ENCODE measurements at regions of chr1 and their contacts with region 1.

Region 1: GRCh38 chr1:35725596-35725995 is 6.9 kb upstream of the C1orf216 start:
- DNase-seq: no peak
- ATAC-seq: no peak

Region 2: GRCh38 chr1:35573198-35574090 is 152.2 kb before region 1 on chr1 and contains the start of gene TFAP2E:
- intact Hi-C with region 1: loop called (anchors 2 kb)
- DNase-seq: no peak
- ATAC-seq: peak; percentile 33
- total RNA-seq, gene TFAP2E: 0.27 TPM